Right cardiac atrium (tissue), 5 donors: ENCODE measurements at regions of chr1 and their contacts with region 1.

Region 1: DNA sequence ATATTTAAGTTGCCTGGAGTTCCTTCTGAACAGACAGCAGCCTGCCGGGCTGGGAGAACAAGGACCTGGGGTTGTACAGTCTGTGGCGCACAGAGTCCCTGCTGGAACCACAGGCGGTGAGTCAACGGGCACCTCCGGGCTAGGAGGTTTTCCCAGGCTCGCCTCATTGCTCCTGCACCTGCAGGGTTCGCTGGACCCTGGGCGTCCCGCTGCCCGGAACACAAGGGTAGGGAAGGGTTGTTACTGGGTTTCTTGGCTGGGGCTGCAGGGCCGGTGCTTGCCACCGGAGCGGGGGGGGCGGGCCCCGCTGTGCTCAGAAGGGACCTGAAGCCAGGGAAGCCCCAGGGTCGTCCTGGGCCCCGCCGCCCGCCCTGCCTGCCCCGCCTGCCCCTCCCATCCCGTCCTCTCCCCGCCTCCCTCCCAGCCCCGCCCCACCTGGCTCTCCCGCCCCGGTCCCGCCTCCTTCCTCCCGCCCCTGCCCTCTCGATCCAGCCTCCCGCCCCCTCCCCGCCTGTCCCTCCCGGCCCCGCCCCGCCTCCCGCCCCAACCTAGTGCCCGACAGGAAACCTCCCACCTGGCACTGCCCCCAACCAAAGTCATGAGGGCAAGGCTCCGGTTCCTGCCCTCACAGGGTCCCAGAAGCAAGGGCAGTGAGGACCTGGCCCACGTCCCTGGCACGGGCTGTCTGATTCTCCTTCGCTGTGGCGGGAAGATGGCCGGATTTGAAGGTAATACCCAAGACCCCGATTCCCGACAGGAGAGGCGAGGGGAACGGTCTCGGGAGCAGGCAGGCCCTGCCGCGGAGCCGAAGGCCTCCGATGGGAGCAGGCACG is 6.8 kb downstream of the JMJD4 start:
- DNase-seq: peak; percentile 79 to 92 (median 90)
- ATAC-seq: peak; percentile 66 to 70
- H3K4me3 ChIP-seq: peak overlapping the region; percentile 55
- H3K27ac ChIP-seq: peak overlapping the region; percentile 76
- H3K4me1 ChIP-seq: peaks cover 10% of the 10 kb centered on the region
- H3K27me3 ChIP-seq: no peaks in the 10 kb centered on the region

Region 2: DNA sequence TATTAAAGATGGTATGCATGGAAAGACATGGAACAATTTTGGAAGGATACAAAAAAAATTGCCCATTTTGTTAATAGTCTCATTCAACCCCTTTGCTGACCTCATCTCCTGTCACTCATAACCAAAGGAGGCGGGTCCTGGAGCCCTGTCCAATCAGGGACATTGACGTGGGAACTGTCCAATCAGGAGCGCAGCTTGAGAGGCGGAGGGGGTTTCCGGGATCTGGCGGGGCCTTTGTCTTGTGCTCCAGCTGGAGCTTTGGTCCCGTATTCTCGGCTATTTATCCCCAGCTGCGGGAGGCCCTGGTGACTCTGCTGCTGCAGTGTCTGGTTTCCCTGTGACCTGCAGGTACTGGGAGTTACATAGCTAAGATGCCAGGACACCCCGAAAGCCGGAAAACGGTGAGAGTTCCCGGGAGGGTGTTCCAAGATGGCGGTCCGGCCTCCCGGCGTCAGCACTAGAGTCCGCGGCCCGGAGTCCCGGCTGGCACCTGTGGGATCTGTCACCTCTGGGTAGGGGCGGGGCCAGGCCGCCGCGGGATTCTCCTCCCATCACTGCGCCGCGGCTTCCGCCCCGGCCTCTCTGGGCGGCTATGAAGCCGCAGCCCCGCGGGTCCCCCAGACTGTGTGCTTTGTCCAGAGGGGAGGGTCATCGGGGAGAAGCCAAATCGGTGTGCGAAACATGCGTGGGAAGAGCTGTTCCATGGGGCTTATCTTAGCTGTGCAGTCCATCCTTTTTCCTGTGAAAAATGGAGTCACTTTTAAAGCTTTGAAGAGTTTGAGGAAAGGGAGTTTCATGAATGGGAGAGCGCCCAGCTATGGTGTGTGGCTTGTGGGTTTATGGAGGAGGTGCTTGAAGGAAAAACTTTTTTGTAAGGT is 164.7 kb before region 1 on chr1 and contains the start of gene ZNF678:
- intact Hi-C with region 1: loop called in 1 of 4 experiments (anchors 10 kb)
- DNase-seq: peak; percentile 93 to 96 (median 95)
- ATAC-seq: peak; percentile 97 to 98
- H3K4me3 ChIP-seq: peak within 1 kb of the TSS; percentile 95
- H3K27ac ChIP-seq: peak within 1 kb of the TSS; percentile 96
- H3K4me1 ChIP-seq: no peaks in the 10 kb centered on the region
- H3K27me3 ChIP-seq: no peaks in the 10 kb centered on the region
- total RNA-seq, gene ZNF678: 3.4 to 6.1 (median 4.2) TPM

Region 3: DNA sequence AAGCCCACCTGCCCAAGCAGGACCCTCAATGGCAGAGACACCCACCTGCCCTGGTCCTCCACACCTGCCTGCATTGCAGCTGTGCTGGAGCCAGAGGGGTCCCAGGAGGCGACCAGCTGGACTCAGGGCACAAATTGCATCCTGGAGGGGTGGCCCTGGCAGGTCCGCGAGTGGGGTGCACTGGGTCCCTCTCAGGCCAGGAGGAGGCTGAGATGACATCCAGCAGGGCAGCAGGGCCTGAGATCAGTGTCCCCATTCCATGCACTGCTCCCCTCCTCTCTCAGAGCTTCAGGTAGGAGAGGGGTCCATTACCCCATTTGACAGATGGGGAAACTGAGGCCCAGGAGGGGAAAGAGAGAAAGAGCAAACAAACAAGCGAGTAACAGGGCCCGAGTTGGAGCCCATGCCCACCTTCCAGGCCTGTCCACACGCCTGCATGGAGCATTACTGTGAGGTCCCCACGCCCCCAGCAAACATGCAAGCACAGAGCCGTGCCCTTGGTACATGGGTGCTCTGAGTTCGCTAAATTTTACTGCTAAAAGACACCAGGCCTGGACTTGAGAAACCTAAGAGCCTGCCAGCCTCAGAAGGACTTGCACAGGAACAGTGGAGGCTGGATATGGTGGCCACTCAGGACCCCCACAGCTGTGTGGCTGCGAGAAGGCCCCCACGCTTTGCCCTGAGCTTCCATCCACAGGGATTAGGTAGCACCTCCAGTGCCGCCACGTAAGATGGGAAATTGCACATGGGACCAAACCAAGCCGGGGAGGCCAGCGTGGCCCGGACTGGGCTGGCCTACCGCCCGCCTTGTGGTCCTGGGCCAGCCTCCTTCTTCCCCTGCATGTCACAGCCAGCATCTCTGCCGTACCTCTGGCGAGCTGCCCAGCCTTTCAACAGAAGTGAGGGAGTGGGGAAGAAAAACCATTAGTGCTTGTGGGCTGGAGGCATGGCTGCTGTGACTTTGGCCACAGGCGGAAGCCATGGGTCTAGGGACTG is 286.0 kb after region 1 on chr1:
- intact Hi-C with region 1: no loop called
- DNase-seq: peak; percentile 52 to 78 (median 70)
- ATAC-seq: no peak
- H3K4me3 ChIP-seq: no peak overlapping the region
- H3K27ac ChIP-seq: no peak overlapping the region
- H3K4me1 ChIP-seq: no peaks in the 10 kb centered on the region
- H3K27me3 ChIP-seq: no peaks in the 10 kb centered on the region